ENCODE measurements at regions of chr7 and their contacts with region 1.

Region 1: DNA sequence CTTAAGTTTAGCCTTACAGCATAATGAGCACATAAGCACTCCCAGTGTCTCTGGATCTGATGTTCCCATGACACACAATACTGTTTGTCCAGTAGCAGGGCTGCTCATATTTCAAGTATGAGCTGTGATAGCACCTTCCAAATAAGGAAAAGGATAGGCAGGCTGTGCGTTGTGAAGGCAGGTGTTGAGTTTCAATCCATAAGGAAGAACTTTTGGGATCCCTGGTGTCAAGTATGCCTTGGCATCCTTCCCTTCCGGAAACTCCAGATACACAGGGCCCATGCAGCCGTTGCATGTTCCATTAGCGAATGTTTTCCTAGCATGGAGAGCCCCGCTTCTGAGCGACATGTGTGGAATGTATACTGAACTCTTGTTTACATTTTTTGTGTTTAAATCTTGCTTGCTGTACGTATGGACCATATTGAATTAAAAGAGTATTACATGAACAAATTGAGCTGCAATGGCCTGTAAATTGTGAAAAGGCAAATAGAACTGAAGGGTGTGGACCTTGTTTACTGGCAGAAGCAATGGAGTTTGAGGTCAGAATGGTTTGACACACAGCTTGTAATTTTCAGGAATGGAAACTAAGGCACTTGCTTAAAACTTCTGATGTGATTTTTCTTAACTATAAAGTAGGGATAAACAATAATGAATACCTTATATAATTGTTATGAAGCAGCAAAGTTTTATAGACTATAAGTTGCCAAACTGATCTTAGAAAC is 33.8 kb upstream of the COBL start:
- DNase-seq: no peak
- ATAC-seq: peak; percentile 88

Region 2: DNA sequence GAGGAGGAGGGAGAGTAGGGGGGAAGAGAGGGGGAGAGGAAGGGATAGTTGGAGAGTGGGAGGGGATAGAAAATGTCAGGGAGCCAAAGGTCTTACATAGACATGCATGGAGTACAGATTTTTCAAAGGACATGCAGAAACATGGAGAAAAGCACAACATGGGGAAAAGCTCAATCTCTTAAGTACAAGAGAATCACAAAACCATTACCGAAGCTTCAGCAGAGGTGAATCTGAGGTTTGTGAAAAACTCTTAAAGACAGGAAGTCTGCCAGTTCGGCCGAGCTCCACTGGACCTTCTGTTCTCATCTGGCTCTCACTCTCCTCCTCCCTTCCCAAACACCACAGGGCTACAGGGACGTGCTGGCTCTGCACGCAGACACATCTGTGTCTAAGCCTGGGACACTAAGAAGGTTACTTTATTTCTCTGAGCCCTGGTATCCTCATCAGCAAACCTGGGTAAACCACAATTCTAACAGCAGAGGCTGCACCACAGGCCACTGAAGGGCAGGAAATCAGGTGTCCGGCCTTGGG is 167.7 kb before region 1 on chr7:
- intact Hi-C with region 1: loop called (anchors 2 kb)
- DNase-seq: no peak
- ATAC-seq: peak; percentile 62

Region 3: GRCh38 chr7:51501620-51502019 is 151.3 kb after region 1 on chr7:
- intact Hi-C with region 1: no loop called
- DNase-seq: no peak
- ATAC-seq: no peak